Endothelial cell of umbilical vein (primary cell): ENCODE measurements at regions of chr13 and their contacts with region 1.

Region 1: GRCh38 chr13:43085545-43085944 is 62.2 kb downstream of the DNAJC15 start:
- DNase-seq: peak; percentile 59
- H3K4me3 ChIP-seq: no peak overlapping the region
- H3K27ac ChIP-seq: no peak overlapping the region
- H3K4me1 ChIP-seq: peaks cover 3% of the 10 kb centered on the region
- H3K27me3 ChIP-seq: no peaks in the 10 kb centered on the region
- CTCF ChIP-seq: peak in 1 of 2 donors; percentile 35
- POLR2A ChIP-seq: no peak

Region 2: DNA sequence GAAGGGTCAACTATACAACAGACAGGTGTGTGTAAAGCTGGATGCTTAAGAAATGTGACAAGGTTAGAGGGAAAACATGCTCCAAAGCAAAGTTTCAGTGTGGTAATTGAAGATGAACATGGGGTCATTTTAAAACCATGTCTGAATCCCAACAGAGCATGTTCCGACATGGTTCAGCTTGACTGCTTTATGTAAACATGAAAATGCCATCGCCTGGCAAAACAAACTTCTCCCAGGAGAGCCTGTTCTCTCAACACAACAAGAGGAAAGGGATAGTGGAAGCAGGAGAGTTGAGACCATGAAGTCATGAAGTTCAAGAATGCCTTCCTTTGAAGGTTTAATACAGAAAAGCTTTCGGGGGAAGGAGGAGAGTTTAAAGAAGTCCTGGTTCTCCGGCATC is 179.3 kb before region 1 on chr13:
- CTCF ChIA-PET with region 1: no interaction called
- POLR2A ChIA-PET with region 1: no interaction called
- dilution Hi-C with region 1: no loop called
- intact Hi-C with region 1: no loop called
- DNase-seq: no peak
- H3K4me3 ChIP-seq: no peak overlapping the region
- H3K27ac ChIP-seq: no peak overlapping the region
- H3K4me1 ChIP-seq: no peaks in the 10 kb centered on the region
- H3K27me3 ChIP-seq: no peaks in the 10 kb centered on the region
- CTCF ChIP-seq: no peak
- POLR2A ChIP-seq: no peak

Region 3: GRCh38 chr13:43074824-43075510 is 10.6 kb before region 1 on chr13:
- CTCF ChIA-PET with region 1: interaction called, 30 read pairs
- POLR2A ChIA-PET with region 1: no interaction called
- dilution Hi-C with region 1: no loop called
- intact Hi-C with region 1: no loop called
- DNase-seq: no peak
- H3K4me3 ChIP-seq: no peak overlapping the region
- H3K27ac ChIP-seq: no peak overlapping the region
- H3K4me1 ChIP-seq: peaks cover 21% of the 10 kb centered on the region
- H3K27me3 ChIP-seq: no peaks in the 10 kb centered on the region
- CTCF ChIP-seq: no peak
- POLR2A ChIP-seq: no peak